Activated B cell treated with CpG ODN at 0.5 μM for 24 hours (primary cell): ENCODE measurements at regions of chr2 and their contacts with region 1.

Region 1: GRCh38 chr2:222655787-222656525 is at the start of gene FARSB:
- DNase-seq: peak; percentile 81
- ATAC-seq: peak; percentile 93
- H3K4me3 Mint-ChIP-seq: peak within 1 kb of the TSS; percentile 97
- H3K27ac Mint-ChIP-seq: peak within 1 kb of the TSS; percentile 99
- H3K4me1 Mint-ChIP-seq: peaks cover 47% of the 10 kb centered on the region
- H3K27me3 Mint-ChIP-seq: no peaks in the 10 kb centered on the region
- CTCF ChIP-seq: no peak
- total RNA-seq, gene FARSB: 21.6 and 23.3 TPM in 2 replicates

Region 2: GRCh38 chr2:222424729-222425671 is 231.0 kb before region 1 on chr2:
- CTCF ChIA-PET with region 1: no interaction called
- POLR2A ChIA-PET with region 1: no interaction called
- intact Hi-C with region 1: loop called (anchors 5 kb)
- DNase-seq: peak; percentile 32
- ATAC-seq: peak; percentile 42
- H3K4me3 Mint-ChIP-seq: peak overlapping the region; percentile 90
- H3K27ac Mint-ChIP-seq: peak overlapping the region; percentile 81
- H3K4me1 Mint-ChIP-seq: peaks cover 47% of the 10 kb centered on the region
- H3K27me3 Mint-ChIP-seq: peaks cover 23% of the 10 kb centered on the region
- CTCF ChIP-seq: no peak